Sciatic nerve (tissue), 2 donors: ENCODE measurements at regions of chr5 and their contacts with region 1.

Region 1: DNA sequence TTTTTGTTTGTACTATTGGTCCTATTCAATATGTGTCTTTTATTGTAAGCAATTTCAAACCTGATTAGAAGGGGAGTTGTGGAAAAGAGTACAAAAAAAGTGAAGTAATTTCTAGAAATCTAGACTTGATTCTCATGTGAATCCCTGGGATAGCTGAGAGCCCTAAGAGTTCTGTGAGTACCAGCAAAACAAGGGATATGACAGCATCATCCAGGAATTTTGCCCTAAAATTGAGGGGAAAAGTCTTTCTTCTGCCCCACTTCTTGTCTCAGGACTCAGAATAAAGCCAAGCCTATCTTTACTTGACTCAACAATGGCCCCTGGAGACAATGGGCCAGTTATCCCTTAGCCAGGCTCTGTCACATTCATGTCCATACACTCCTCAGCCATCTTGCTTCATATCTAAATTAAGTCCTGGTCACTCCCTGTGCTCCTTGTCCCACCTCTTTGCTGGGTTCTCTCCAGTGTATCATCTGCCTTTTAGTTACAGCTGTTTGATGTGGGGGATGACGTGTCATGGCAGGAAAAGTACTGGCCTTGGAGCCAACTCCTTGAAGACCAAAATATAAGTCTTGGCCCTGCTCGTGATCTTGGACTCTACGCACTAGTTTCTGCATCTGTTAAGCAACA is 81.2 kb downstream of the ADAMTS12 start:
- DNase-seq: no peak
- ATAC-seq: peak; percentile 56

Region 2: GRCh38 chr5:32004404-32004803 is 1806.2 kb before region 1 on chr5:
- intact Hi-C with region 1: loop called (anchors 5 kb)
- DNase-seq: peak; percentile 2
- ATAC-seq: no peak

Region 3: GRCh38 chr5:33772380-33772897 is 38.2 kb before region 1 on chr5:
- intact Hi-C with region 1: loop called (anchors 1 kb)
- DNase-seq: no peak
- ATAC-seq: peak; percentile 33